ENCODE measurements at regions of chr10 and their contacts with region 1.

Region 1: GRCh38 chr10:103605359-103606095 is 112.0 kb downstream of the NEURL1 start:
- DNase-seq: peak; percentile 55
- ATAC-seq: peak; percentile 47
- H3K4me3 Mint-ChIP-seq: no peak overlapping the region
- H3K27ac Mint-ChIP-seq: no peak overlapping the region
- H3K4me1 Mint-ChIP-seq: no peaks in the 10 kb centered on the region
- H3K27me3 Mint-ChIP-seq: no peaks in the 10 kb centered on the region

Region 2: DNA sequence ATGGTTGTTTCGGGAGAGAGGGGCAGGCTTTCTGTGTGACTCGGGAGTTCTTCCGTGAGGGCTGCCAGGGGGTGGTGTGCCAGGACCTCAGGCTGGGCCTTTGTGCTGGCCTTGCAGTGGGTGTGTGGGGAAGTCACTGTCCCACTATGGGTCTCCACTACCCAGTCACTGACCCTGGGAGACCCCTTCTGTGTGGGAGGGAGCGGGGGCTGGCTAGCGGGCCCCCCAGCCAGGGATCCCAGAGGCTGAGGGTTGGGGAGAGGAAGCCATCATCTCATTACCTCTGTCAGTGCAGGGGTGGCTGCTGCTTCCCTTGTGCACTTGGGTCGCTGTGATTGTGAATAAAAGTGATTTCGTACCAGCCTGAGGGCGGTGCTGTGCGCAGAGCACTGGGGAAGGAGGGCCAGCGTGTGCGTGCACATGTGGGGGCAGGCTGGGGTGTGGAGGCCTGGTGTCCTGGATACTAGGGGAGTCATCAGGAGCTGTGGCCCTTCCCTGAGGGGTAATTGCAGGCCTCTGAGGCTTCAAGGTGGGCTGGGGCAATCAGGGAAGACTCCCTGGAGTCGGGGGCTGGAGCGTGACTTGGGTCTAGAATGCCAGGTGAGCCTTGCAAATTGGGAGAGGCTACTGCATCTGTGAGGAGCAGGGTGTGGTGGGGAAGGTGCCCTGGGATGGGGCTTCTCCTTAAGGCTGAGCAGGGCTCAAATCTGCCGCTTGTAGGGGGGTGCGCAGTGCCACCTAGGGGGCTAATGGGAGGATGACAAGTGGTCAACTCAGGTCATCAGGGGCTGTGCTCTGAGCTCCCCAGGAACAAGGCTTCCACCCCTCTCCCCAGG is 13.1 kb before region 1 on chr10:
- CTCF ChIA-PET with region 1: interaction called, 13 read pairs
- POLR2A ChIA-PET with region 1: no interaction called
- DNase-seq: peak; percentile 64
- ATAC-seq: peak; percentile 73
- H3K4me3 Mint-ChIP-seq: no peak overlapping the region
- H3K27ac Mint-ChIP-seq: no peak overlapping the region
- H3K4me1 Mint-ChIP-seq: peaks cover 5% of the 10 kb centered on the region
- H3K27me3 Mint-ChIP-seq: no peaks in the 10 kb centered on the region

Region 3: GRCh38 chr10:103699611-103700435 is 94.3 kb after region 1 on chr10:
- CTCF ChIA-PET with region 1: no interaction called
- POLR2A ChIA-PET with region 1: no interaction called
- DNase-seq: no peak
- ATAC-seq: no peak
- H3K4me3 Mint-ChIP-seq: no peak overlapping the region
- H3K27ac Mint-ChIP-seq: no peak overlapping the region
- H3K4me1 Mint-ChIP-seq: peaks cover 31% of the 10 kb centered on the region
- H3K27me3 Mint-ChIP-seq: no peaks in the 10 kb centered on the region

Measured in activated CD8-positive, alpha-beta T cell treated with anti-CD3 and anti-CD28 coated beads, Interleukin-2, amount 10 ng/mL, durations not matched to agents 7 days and 5 days (primary cell).